Left cardiac atrium (tissue), 4 donors: ENCODE measurements at regions of chr4 and their contacts with region 1.

Region 1: GRCh38 chr4:78704981-78705683 is 71.0 kb upstream of the BMP2K start:
- DNase-seq: no peak
- ATAC-seq: peak; percentile 78 to 87

Region 2: DNA sequence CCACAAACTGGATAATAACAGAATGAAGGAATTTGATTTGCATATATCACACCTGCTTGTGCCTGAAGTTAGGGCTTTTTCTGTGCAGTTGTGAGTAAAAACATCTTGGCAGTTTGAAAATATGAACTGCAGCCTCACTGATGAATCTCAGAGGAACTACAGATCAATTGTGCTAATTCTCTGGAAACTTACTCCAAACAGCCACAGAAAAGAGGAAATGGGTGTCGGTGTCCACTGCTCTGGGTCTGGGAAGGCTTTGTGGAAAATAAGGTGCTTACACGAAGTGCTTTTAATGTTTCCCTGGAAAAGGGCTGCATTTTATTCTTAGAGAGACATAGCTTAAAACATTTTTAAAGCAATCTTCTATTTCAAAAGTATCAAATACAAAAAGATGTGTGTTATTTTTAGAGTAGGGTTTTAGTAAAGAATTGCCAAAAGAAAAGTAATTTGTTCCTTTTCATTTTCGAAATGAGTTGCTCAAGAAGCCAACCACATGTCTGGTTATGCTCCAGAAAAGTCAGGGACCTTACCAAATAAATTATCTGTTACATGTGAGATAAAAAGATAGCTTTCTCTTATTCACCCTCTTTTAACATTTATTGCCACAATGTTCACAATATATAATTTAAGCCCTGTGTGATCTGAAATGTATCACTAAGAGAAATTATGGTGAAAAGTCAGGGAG is 407.9 kb before region 1 on chr4:
- intact Hi-C with region 1: no loop called
- DNase-seq: no peak
- ATAC-seq: no peak

Region 3: DNA sequence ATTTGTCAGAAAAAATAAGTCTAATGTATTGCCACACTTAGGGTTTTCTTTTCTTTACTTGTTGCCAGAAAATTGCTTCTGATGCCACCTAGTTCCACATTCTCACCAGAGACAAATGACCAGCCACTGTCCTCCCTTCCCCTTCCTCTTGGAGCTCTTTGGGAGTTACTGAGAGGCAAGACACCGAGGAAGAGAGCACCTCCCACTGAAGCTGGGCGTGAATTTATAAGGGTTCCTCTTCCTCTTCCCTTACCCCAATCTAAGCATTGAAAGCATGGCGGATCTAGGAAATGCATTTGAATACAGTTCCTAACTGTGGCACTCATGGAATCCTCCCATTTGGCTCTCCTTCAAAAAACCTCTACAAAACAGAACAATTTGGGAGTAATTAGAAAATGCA is 123.5 kb before region 1 on chr4:
- intact Hi-C with region 1: no loop called
- DNase-seq: no peak
- ATAC-seq: peak in 1 of 2 donors; percentile 74

Region 4: DNA sequence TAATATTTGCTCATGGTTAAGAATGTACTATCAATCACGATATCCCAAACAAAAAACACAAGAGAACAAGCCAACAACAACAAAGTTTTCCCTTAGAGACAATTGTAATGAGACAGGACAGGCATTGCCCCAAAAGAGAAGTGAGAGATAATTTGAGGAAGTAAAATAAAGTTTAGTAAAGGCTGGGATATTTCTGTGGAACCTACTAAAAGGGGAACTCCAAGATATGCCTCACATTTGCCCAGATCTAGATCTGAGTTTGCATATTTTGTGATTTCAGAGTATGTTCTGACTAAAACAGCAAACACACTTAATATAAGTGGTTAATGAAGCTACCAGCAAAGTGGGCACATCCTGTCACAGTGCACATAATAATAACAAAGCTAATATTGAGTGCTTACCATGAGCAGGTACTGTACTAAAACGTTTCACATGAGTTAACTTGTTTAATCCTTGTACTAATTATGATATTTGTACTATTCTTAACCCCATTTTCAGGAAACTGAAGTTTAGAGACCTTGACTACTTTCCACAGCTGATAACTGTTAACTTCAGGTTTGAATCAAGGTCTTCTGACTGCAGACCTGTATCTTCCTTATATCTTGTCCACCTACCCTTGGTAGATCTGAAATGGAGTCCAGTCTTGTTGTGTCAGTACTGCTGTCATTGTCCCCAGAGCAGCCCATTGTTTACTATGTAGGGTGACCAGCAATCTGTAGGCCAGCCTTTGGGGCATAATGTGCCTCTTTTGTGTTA is 45.0 kb after region 1 on chr4:
- intact Hi-C with region 1: loop called in 1 of 2 experiments (anchors 10 kb)
- DNase-seq: no peak
- ATAC-seq: peak; percentile 41 to 65